ENCODE measurements at regions of chr22 and their contacts with region 1.

Region 1: DNA sequence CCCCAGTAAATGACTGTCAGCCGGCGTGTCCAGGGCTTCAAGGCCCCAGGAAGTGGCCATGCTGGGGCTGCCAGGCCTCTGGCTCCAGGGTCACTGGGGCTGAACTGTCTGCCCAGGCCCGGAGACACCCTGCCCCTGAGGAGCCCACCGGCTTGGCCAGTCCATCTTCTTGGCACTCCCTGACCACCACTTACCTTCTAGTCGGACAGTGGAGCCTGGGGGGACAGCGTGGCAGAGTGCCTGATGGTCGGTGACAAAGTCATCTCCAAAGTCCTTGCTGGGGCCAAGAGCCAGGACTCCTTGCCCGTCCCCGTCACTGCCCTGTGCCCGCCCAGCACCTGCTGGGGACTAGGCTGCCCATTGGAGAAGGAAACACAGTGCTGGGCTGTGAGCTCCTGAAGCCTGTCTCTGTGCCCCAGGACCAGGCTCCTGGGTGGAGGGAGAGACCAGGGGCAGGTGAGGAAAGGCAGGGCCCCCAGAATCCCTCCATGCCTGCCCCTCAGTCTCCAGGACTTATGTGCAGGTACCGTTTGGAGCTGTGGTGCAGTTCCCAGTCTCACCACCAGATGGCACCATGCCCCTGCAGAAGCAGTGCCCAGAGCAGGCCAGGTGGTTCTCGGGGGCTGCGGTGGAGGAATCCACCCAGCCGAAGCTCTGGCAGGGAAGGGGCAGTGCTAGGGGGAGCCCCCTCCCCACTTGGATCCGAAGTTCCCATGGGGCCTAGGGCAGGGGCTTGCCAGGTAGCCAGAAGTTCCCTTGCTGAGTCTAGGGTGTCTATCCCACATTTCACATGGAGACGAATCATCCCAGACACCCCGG is 6.0 kb upstream of the CCDC188 start:
- DNase-seq: peak; percentile 42
- ATAC-seq: peak; percentile 81
- H3K4me3 ChIP-seq: no peak overlapping the region
- H3K27ac ChIP-seq: no peak overlapping the region
- H3K4me1 ChIP-seq: no peaks in the 10 kb centered on the region
- H3K27me3 ChIP-seq: peaks cover 17 to 57% of the 10 kb centered on the region in 2 experiments
- CTCF ChIP-seq: peak; percentile 99
- EP300 ChIP-seq: no peak
- POLR2A ChIP-seq: no peak
- RAD21 ChIP-seq: peak; percentile 98

Region 2: GRCh38 chr22:18970176-18970947 is 1186.5 kb before region 1 on chr22:
- CTCF ChIA-PET with region 1: no interaction called
- POLR2A ChIA-PET with region 1: no interaction called
- in situ Hi-C with region 1: loop called (anchors 25 kb)
- intact Hi-C with region 1: no loop called
- DNase-seq: no peak
- ATAC-seq: peak; percentile 56
- H3K4me3 ChIP-seq: peak overlapping the region; percentile 53 to 71 (median 59)
- H3K27ac ChIP-seq: no peak overlapping the region
- H3K4me1 ChIP-seq: peaks cover 16% of the 10 kb centered on the region
- H3K27me3 ChIP-seq: peaks cover 1 to 15% of the 10 kb centered on the region in 2 experiments; a peak in 3 of 5 replicates
- CTCF ChIP-seq: peak; percentile 2; the same call in 1 of the 2 replicates
- EP300 ChIP-seq: no peak
- POLR2A ChIP-seq: no peak
- RAD21 ChIP-seq: no peak

Region 3: DNA sequence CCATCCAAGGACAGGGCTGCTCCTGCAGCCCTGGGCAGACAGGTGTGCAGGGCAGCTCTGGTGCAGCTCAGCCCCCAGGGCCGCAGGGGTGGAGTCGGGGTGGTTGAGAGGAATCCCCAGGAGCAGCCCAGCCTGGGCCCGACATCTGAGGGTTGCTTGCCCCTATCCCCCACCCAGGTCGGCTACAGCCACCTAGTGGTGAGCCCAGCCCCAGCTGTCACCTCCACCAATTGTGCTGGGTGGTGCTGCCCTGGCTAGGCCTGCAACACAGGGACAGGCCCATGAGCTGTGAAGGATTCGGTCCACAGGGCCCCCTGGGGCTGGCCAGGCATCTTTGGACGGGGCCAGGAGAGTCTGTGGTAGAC is 81.7 kb after region 1 on chr22:
- CTCF ChIA-PET with region 1: interaction called, 3 read pairs
- POLR2A ChIA-PET with region 1: no interaction called
- in situ Hi-C with region 1: loop called (anchors 10 kb)
- intact Hi-C with region 1: loop called (anchors 1 kb)
- DNase-seq: peak; percentile 41
- ATAC-seq: peak; percentile 91
- H3K4me3 ChIP-seq: no peak overlapping the region
- H3K27ac ChIP-seq: no peak overlapping the region
- H3K4me1 ChIP-seq: 0 out of 2 replicates have a peak, but pooled peaks cover 5% of the 10 kb centered on the region
- H3K27me3 ChIP-seq: peaks cover 17 to 82% of the 10 kb centered on the region in 2 experiments
- CTCF ChIP-seq: peak; percentile 88
- EP300 ChIP-seq: no peak
- POLR2A ChIP-seq: no peak
- RAD21 ChIP-seq: peak; percentile 86

Region 4: DNA sequence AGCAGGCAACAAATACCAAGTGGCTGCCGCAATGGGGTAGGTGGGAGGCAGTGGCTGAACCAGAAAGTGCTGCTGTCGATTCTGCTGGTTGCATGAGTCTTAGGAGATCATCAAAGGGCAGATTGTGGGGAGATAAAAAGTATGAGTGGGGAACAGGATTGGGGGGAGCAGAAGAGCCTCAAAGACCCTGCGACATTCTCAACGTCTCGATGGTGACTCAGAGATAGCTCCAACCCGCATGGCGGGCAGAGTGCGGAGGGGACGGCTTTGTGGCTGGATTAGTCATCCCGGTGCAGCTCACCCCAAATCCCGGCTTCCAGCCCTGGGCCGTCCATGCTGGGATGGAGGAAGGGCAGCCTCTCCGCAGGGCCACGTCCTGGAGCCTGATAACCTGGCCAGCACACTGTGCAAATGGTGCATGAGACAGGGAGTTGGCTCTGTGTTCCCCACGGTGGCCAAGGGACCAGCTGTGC is 122.9 kb after region 1 on chr22:
- CTCF ChIA-PET with region 1: interaction called, 28 read pairs
- POLR2A ChIA-PET with region 1: no interaction called
- in situ Hi-C with region 1: loop called (anchors 5 kb)
- intact Hi-C with region 1: no loop called
- DNase-seq: no peak
- ATAC-seq: no peak
- H3K4me3 ChIP-seq: no peak overlapping the region
- H3K27ac ChIP-seq: no peak overlapping the region
- H3K4me1 ChIP-seq: no peaks in the 10 kb centered on the region
- H3K27me3 ChIP-seq: peaks cover 8 to 50% of the 10 kb centered on the region in 2 experiments; a peak in 4 of 5 replicates
- CTCF ChIP-seq: no peak
- EP300 ChIP-seq: no peak
- POLR2A ChIP-seq: no peak
- RAD21 ChIP-seq: no peak

Measured in HepG2 (cell line).